ENCODE measurements at regions of chr1 and their contacts with region 1.

Region 1: GRCh38 chr1:172180501-172181285 is 239.8 kb upstream of the C1orf105 start:
- DNase-seq: peak; percentile 22 to 71
- ATAC-seq: peak; percentile 67 to 79 (median 73)
- H3K4me3 ChIP-seq: peak overlapping the region; percentile 14
- H3K4me3 Mint-ChIP-seq: peak overlapping the region; percentile 89
- H3K27ac ChIP-seq: peak overlapping the region; percentile 94
- H3K27ac Mint-ChIP-seq: peak overlapping the region; percentile 97
- H3K4me1 ChIP-seq: peaks cover 14% of the 10 kb centered on the region
- H3K4me1 Mint-ChIP-seq: peaks cover 21 to 24% of the 10 kb centered on the region in 2 donors
- H3K27me3 ChIP-seq: no peaks in the 10 kb centered on the region
- H3K27me3 Mint-ChIP-seq: no peaks in the 10 kb centered on the region
- CTCF ChIP-seq: no peak

Region 2: GRCh38 chr1:172069534-172069933 is 111.2 kb before region 1 on chr1:
- intact Hi-C with region 1: no loop called
- DNase-seq: no peak
- ATAC-seq: no peak
- H3K4me3 ChIP-seq: no peak overlapping the region
- H3K4me3 Mint-ChIP-seq: no peak overlapping the region
- H3K27ac ChIP-seq: no peak overlapping the region
- H3K27ac Mint-ChIP-seq: no peak overlapping the region
- H3K4me1 ChIP-seq: no peaks in the 10 kb centered on the region
- H3K4me1 Mint-ChIP-seq: no peaks in the 10 kb centered on the region
- H3K27me3 ChIP-seq: no peaks in the 10 kb centered on the region
- H3K27me3 Mint-ChIP-seq: no peaks in the 10 kb centered on the region
- CTCF ChIP-seq: no peak

Region 3: GRCh38 chr1:172135076-172135672 is 45.5 kb before region 1 on chr1:
- intact Hi-C with region 1: loop called (anchors 5 kb)
- DNase-seq: peak in 1 of 2 donors; percentile 69
- ATAC-seq: peak in 2 of 3 donors; percentile 69 to 72
- H3K4me3 ChIP-seq: no peak overlapping the region
- H3K4me3 Mint-ChIP-seq: no peak overlapping the region
- H3K27ac ChIP-seq: no peak overlapping the region
- H3K27ac Mint-ChIP-seq: peak overlapping the region in 1 of 2 donors; percentile 11
- H3K4me1 ChIP-seq: no peaks in the 10 kb centered on the region
- H3K4me1 Mint-ChIP-seq: peaks cover 0 to 7% of the 10 kb centered on the region in 2 donors
- H3K27me3 ChIP-seq: no peaks in the 10 kb centered on the region
- H3K27me3 Mint-ChIP-seq: peaks cover 0 to 3% of the 10 kb centered on the region in 2 donors
- CTCF ChIP-seq: peak; percentile 81